Posterior cingulate gyrus (tissue), 11 donors: ENCODE measurements at regions of chr18 and their contacts with region 1.

Region 1: GRCh38 chr18:48475635-48476549 is 62.9 kb upstream of the CTIF start:
- DNase-seq: peak in 5 of 10 donors; percentile 42 to 87 (median 51)

Region 2: DNA sequence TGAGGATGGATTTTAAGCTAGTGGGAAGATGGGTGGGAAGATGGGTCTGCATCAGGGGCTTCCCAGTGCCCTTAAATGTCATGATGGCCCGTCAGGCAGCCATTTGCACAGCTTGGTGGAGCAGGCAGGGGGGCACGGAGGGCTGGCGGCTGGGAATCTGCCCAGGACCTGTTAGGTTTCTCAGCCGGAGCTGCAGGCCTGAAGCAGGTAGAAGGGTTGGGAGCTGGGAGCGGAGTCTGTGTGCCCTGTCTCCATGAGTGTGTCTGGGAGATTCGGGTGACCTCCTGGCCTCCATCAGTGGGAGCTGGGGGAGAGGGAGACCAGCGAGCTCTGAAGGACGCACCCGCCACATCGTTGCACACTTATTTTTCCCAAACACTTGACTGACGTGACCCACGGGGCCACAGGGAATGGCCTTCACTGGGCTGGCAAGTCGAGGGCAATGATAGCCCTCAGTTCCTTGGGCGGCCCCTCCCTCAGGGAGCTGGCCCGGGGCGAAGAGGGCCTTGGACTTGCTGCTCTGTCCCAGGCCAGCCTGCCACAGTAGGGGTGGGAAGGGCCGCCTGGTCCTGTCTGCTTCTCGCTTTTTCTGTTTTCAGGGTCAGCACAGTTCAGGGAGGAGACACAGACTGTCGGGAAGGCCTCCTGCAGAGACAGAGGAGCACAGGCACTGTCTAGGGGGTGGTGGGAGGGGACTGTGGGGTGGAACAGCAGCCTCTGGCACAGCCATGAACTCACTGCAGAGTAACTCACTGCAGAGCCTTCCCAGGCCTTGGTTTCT is 303.5 kb before region 1 on chr18:
- intact Hi-C with region 1: no loop called
- DNase-seq: no peak

Region 3: GRCh38 chr18:48639772-48640432 is 164.0 kb after region 1 on chr18:
- intact Hi-C with region 1: no loop called
- DNase-seq: peak in 2 of 10 donors; percentile 81 to 83

Region 4: DNA sequence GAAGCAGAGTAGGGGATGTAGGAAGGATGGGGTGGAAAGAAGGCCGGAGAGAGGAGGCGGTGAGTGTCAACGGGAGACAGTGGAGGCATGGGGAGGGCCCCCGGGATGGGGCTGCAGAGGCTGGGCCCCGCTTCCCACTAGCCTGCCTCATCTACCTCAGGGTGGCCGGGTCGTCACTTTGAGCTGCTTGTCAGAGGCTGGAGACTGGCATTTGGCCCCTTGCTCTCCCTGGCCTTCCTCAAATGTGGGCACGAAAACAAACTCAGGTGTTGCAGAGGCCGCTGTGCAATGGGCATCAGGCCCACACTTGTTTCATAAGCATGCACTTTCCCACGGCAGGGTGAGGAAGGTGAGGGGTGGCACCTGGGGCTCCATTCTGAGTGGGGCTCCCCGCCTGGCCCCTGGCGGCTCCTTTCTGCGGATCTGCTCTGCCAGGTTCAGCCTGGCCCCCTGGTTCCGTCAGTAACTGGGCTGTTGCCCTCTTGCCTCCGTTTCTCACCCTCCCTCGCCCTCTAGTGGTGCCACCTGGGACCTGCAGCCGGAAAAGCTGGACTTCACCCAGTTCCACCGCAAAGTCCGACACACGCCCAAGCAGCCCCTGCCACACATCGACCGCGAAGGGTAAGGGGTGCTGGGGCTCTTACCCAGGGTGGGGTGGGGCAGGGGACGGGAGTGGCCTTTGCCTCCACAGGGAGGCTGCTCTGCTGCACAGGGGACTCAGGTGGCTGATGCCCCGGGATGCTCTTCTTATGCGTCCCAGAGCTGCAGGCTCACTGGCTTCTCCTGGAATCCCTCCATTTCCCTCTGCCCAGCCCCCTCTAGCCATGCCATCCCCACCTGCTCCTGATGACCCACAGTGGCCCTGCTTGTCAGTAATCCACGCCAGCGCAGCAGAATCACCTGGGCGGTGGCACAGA is 188.3 kb after region 1 on chr18:
- intact Hi-C with region 1: loop called (anchors 1 kb)
- DNase-seq: peak; percentile 66 to 97 (median 86)